ENCODE measurements at regions of chr1 and their contacts with region 1.

Region 1: GRCh38 chr1:241998412-241998921 is 431 bp downstream of the MAP1LC3C start:
- DNase-seq: peak; percentile 51 to 72
- ATAC-seq: peak; percentile 56 to 87
- H3K4me3 ChIP-seq: peak overlapping the region in 3 of 4 donors; percentile 15 to 35 (median 31)
- H3K27ac ChIP-seq: peak overlapping the region in 2 of 4 donors; percentile 39 to 46
- H3K4me1 ChIP-seq: peaks cover 0 to 5% of the 10 kb centered on the region in 2 donors
- H3K27me3 ChIP-seq: no peaks in the 10 kb centered on the region
- CTCF ChIP-seq: peak in 4 of 5 experiments; percentile 20 to 37 (median 24)
- POLR2A ChIP-seq: no peak

Region 2: GRCh38 chr1:241611063-241611462 is 387.4 kb before region 1 on chr1:
- in situ Hi-C with region 1: loop called in 3 of 4 experiments (anchors 10 to 25 kb)
- intact Hi-C with region 1: loop called (anchors 10 kb)
- DNase-seq: no peak
- ATAC-seq: peak; percentile 78 to 84
- H3K4me3 ChIP-seq: no peak overlapping the region
- H3K27ac ChIP-seq: no peak overlapping the region
- H3K4me1 ChIP-seq: no peaks in the 10 kb centered on the region
- H3K27me3 ChIP-seq: no peaks in the 10 kb centered on the region
- CTCF ChIP-seq: peak; percentile 61 to 85 (median 69)
- POLR2A ChIP-seq: no peak

Region 3: GRCh38 chr1:242033447-242033846 is 35.0 kb after region 1 on chr1:
- in situ Hi-C with region 1: no loop called
- intact Hi-C with region 1: no loop called
- DNase-seq: no peak
- ATAC-seq: no peak
- H3K4me3 ChIP-seq: no peak overlapping the region
- H3K27ac ChIP-seq: no peak overlapping the region
- H3K4me1 ChIP-seq: no peaks in the 10 kb centered on the region
- H3K27me3 ChIP-seq: no peaks in the 10 kb centered on the region
- CTCF ChIP-seq: no peak
- POLR2A ChIP-seq: no peak

Measured in gastrocnemius medialis (tissue), 4 donors.